ENCODE measurements at regions of chr5 and their contacts with region 1.

Region 1: GRCh38 chr5:68252673-68253623 is 37.4 kb downstream of the PIK3R1 start:
- DNase-seq: peak; percentile 72
- ATAC-seq: peak; percentile 33
- H3K4me3 Mint-ChIP-seq: no peak overlapping the region
- H3K27ac Mint-ChIP-seq: no peak overlapping the region
- H3K4me1 Mint-ChIP-seq: peaks cover 94% of the 10 kb centered on the region
- H3K27me3 Mint-ChIP-seq: no peaks in the 10 kb centered on the region

Region 2: DNA sequence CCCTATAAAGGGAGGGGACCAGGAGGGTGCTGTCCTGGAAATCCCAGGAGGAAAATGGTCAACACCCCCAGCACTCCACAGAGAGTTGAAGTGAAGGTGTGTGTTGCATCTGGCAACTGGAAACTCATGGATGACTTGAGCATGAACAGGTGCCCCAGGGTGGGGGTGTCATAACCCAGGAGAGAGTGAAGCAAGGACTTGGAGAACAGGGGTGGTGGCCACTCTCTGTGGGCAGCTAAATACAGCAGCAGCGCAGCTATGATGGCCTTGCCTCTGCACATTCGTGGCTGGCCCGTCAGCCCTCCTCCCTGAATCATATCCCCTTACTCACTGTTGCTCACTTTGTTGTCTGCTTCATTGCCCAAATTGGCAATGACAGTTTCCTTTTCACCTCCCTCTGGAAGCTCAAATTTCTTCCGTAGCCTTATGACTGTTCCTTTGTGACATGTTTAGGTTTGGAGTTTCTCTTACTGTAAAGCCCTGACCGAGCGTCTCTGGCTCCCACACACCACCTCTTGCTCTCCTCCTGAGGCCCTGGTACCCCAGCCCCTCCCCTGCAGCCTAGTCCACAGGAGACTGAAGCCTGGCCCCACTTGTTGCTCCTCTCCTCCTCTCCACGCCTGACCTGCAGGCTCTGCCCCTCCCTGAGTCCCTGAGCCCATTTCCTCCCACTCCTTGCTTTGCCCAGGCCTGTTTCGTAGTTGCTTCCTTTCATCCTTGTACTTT is 1242.1 kb before region 1 on chr5:
- CTCF ChIA-PET with region 1: no interaction called
- POLR2A ChIA-PET with region 1: no interaction called
- intact Hi-C with region 1: loop called in 1 of 2 experiments (anchors 10 kb)
- DNase-seq: peak; percentile 61
- ATAC-seq: peak; percentile 16
- H3K4me3 Mint-ChIP-seq: no peak overlapping the region
- H3K27ac Mint-ChIP-seq: peak overlapping the region; percentile 71
- H3K4me1 Mint-ChIP-seq: peaks cover 95% of the 10 kb centered on the region
- H3K27me3 Mint-ChIP-seq: no peaks in the 10 kb centered on the region

Region 3: GRCh38 chr5:67246108-67246507 is 1006.8 kb before region 1 on chr5:
- CTCF ChIA-PET with region 1: interaction called, 24 read pairs
- POLR2A ChIA-PET with region 1: no interaction called
- intact Hi-C with region 1: loop called (anchors 1 to 5 kb)
- DNase-seq: no peak
- ATAC-seq: peak; percentile 33
- H3K4me3 Mint-ChIP-seq: no peak overlapping the region
- H3K27ac Mint-ChIP-seq: no peak overlapping the region
- H3K4me1 Mint-ChIP-seq: peaks cover 8% of the 10 kb centered on the region
- H3K27me3 Mint-ChIP-seq: no peaks in the 10 kb centered on the region

Region 4: GRCh38 chr5:68070591-68071281 is 182.2 kb before region 1 on chr5:
- CTCF ChIA-PET with region 1: interaction called, 4 read pairs
- POLR2A ChIA-PET with region 1: no interaction called
- intact Hi-C with region 1: loop called in 1 of 2 experiments (anchors 5 kb)
- DNase-seq: peak; percentile 10
- ATAC-seq: peak; percentile 79
- H3K4me3 Mint-ChIP-seq: no peak overlapping the region
- H3K27ac Mint-ChIP-seq: no peak overlapping the region
- H3K4me1 Mint-ChIP-seq: peaks cover 13% of the 10 kb centered on the region
- H3K27me3 Mint-ChIP-seq: no peaks in the 10 kb centered on the region

Region 5: GRCh38 chr5:68239487-68239886 is 13.5 kb before region 1 on chr5:
- CTCF ChIA-PET with region 1: interaction called, 5 read pairs
- POLR2A ChIA-PET with region 1: no interaction called
- intact Hi-C with region 1: loop called in 1 of 2 experiments (anchors 2 kb)
- DNase-seq: peak; percentile 92
- ATAC-seq: peak; percentile 97
- H3K4me3 Mint-ChIP-seq: peak overlapping the region; percentile 57
- H3K27ac Mint-ChIP-seq: peak overlapping the region; percentile 76
- H3K4me1 Mint-ChIP-seq: peaks cover 78% of the 10 kb centered on the region
- H3K27me3 Mint-ChIP-seq: no peaks in the 10 kb centered on the region

Region 6: GRCh38 chr5:68279984-68280383 is 27.0 kb after region 1 on chr5:
- CTCF ChIA-PET with region 1: interaction called, 11 read pairs
- POLR2A ChIA-PET with region 1: interaction called, 5 read pairs
- intact Hi-C with region 1: no loop called
- DNase-seq: peak; percentile 54
- ATAC-seq: peak; percentile 91
- H3K4me3 Mint-ChIP-seq: peak overlapping the region; percentile 69
- H3K27ac Mint-ChIP-seq: peak overlapping the region; percentile 96
- H3K4me1 Mint-ChIP-seq: peaks cover 92% of the 10 kb centered on the region
- H3K27me3 Mint-ChIP-seq: no peaks in the 10 kb centered on the region

Measured in activated CD4-positive, alpha-beta T cell treated with anti-CD3 and anti-CD28 coated beads for 36 hours (primary cell).